Activated B cell treated with CpG ODN at 0.5 μM for 24 hours (primary cell): ENCODE measurements at regions of chr11 and their contacts with region 1.

Region 1: DNA sequence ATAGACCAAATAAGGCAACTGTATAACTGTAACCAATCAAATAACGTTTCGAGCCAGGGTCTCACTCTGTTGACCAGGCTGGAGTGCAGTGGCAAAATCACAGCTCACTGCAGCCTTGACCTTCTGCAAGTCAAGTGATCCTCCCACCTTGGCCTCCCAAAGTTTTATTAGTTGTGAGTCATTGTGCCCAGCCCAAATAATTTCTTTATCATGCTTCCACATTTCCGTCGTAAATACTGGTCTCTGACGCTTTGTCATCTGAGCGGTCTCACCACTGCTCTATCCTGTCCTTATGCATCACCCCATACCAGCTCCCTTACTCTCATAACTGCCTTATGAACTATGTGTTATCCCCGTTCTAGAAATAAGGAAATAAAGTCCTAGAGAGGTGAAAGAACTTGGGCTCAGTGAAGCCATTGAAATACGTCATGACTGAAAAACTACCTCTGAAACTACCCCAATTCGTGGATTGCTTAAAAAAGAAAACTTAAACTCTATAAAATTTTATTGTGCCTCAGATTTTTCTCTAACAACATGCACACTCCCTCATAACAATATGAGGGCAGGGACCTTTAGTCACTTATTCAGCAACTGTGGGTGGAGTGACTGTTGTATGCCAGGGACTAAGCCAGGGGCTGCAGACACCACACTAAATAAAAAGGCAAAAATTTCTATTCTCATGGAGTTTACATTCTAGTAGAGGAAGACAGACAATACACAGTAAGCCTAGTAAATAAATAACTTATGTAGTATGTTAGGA is 15.8 kb upstream of the RTN4RL2 start:
- DNase-seq: no peak
- ATAC-seq: no peak
- H3K4me3 Mint-ChIP-seq: no peak overlapping the region
- H3K27ac Mint-ChIP-seq: no peak overlapping the region
- H3K4me1 Mint-ChIP-seq: no peaks in the 10 kb centered on the region
- H3K27me3 Mint-ChIP-seq: peaks cover 12% of the 10 kb centered on the region
- CTCF ChIP-seq: no peak

Region 2: DNA sequence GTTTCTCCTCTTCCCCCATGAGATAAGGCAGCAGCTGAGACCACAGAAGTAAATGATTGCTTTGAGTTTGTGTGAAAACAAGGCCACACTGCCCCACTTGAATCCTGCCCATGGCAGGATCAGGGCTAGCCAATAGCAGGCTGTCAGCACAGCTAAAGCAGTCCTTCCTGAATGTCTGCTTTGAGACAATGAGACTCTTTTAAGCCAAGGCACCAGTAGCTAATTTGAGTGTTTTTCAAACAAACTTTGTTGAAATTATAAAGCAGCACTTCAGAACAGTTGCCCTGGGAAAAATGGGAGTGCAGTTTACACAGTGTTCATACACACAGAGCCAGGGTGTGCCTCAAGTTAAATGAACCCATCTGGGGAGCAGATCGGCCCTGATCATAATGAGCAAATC is 559.4 kb before region 1 on chr11:
- CTCF ChIA-PET with region 1: no interaction called
- POLR2A ChIA-PET with region 1: no interaction called
- intact Hi-C with region 1: no loop called
- DNase-seq: no peak
- ATAC-seq: no peak
- H3K4me3 Mint-ChIP-seq: no peak overlapping the region
- H3K27ac Mint-ChIP-seq: no peak overlapping the region
- H3K4me1 Mint-ChIP-seq: no peaks in the 10 kb centered on the region
- H3K27me3 Mint-ChIP-seq: no peaks in the 10 kb centered on the region
- CTCF ChIP-seq: no peak

Region 3: DNA sequence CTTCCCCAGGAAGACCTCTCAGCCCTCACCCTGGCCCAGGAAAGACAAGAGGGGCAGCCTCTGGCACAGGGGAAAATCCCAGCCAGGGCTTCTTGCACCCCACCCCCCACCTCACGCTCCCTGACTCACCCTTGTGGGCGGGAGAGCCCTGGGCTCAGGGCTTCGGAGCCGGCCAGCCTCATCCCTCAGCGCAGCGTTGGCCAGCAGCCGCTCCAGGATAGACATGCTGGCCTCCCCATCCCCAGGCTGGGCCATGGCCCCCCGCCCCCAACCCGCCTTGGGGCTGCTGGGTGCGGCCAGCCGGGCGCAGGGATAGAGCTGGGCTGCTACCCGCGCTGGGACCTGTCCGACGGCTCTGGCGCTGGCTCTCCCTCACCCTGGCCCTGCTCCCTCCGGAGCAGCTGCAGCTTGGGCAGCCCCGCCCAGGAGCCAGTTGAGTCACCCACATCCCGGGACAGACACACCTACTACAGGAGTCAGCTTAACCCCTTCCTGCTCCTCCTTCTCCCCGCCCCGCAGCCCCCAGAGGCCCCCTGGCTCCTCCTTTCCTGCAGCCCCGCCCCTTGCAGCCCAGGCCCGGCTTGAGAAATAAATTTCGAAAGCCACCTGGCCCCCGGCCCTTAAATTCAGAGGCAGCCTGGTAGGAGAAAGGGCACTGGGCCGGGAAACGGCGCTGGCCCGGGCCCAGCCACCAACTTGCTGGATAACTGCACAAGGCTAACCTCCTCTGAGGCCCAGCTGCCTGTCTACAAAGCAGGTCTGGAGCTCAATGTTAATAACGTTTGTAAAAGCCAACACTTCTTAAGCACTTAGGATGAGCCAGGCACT is 133.2 kb before region 1 on chr11:
- CTCF ChIA-PET with region 1: no interaction called
- POLR2A ChIA-PET with region 1: no interaction called
- intact Hi-C with region 1: no loop called
- DNase-seq: no peak
- ATAC-seq: peak; percentile 86
- H3K4me3 Mint-ChIP-seq: peak overlapping the region; percentile 25
- H3K27ac Mint-ChIP-seq: no peak overlapping the region
- H3K4me1 Mint-ChIP-seq: peaks cover 17% of the 10 kb centered on the region
- H3K27me3 Mint-ChIP-seq: peaks cover 5% of the 10 kb centered on the region
- CTCF ChIP-seq: no peak

Region 4: GRCh38 chr11:57432149-57432561 is 12.4 kb before region 1 on chr11:
- CTCF ChIA-PET with region 1: no interaction called
- POLR2A ChIA-PET with region 1: interaction called, 11 read pairs
- intact Hi-C with region 1: no loop called
- DNase-seq: no peak
- ATAC-seq: no peak
- H3K4me3 Mint-ChIP-seq: no peak overlapping the region
- H3K27ac Mint-ChIP-seq: no peak overlapping the region
- H3K4me1 Mint-ChIP-seq: peaks cover 6% of the 10 kb centered on the region
- H3K27me3 Mint-ChIP-seq: no peaks in the 10 kb centered on the region
- CTCF ChIP-seq: no peak